BJ (cell line): ENCODE measurements at regions of chr18 and their contacts with region 1.

Region 1: GRCh38 chr18:11320986-11321385 is 171.6 kb upstream of the PIEZO2 start:
- DNase-seq: peak; percentile 77
- H3K4me3 ChIP-seq: no peak overlapping the region
- H3K27me3 ChIP-seq: no peaks in the 10 kb centered on the region
- CTCF ChIP-seq: no peak

Region 2: GRCh38 chr18:11178951-11179549 is 141.9 kb before region 1 on chr18:
- CTCF ChIA-PET with region 1: no interaction called
- POLR2A ChIA-PET with region 1: no interaction called
- DNase-seq: no peak
- H3K4me3 ChIP-seq: no peak overlapping the region
- H3K27me3 ChIP-seq: no peaks in the 10 kb centered on the region
- CTCF ChIP-seq: no peak

Region 3: GRCh38 chr18:11259469-11260150 is 61.4 kb before region 1 on chr18:
- CTCF ChIA-PET with region 1: no interaction called
- POLR2A ChIA-PET with region 1: no interaction called
- DNase-seq: no peak
- H3K4me3 ChIP-seq: no peak overlapping the region
- H3K27me3 ChIP-seq: 0 out of 2 replicates have a peak, but pooled peaks cover 1% of the 10 kb centered on the region
- CTCF ChIP-seq: no peak

Region 4: GRCh38 chr18:11310476-11311086 is 10.4 kb before region 1 on chr18:
- CTCF ChIA-PET with region 1: interaction called, 21 read pairs
- POLR2A ChIA-PET with region 1: no interaction called
- DNase-seq: no peak
- H3K4me3 ChIP-seq: no peak overlapping the region
- H3K27me3 ChIP-seq: no peaks in the 10 kb centered on the region
- CTCF ChIP-seq: peak; percentile 81

Region 5: DNA sequence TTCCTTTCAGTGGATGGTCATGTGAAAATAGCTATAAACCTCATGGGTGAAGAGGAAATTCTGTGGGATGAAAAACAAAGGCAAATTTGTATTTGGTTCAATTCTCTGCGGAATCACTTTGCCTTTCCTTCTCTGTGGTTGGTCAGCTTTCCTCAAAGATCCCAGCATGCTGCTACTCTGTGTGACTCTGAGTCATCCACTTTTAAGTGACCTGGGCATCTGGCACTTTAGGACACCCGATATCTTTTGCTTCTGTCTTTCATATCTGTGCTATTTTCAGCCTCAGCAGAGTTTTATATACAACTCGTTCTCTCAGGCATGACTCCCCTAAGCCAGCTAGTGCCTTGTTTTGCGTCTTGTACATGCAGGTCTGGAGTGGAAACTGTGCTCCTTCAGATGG is 45.4 kb after region 1 on chr18:
- CTCF ChIA-PET with region 1: no interaction called
- POLR2A ChIA-PET with region 1: no interaction called
- DNase-seq: peak; percentile 2
- H3K4me3 ChIP-seq: no peak overlapping the region
- H3K27me3 ChIP-seq: no peaks in the 10 kb centered on the region
- CTCF ChIP-seq: no peak